CD8-positive, alpha-beta T cell (primary cell): ENCODE measurements at regions of chr17 and their contacts with region 1.

Region 1: DNA sequence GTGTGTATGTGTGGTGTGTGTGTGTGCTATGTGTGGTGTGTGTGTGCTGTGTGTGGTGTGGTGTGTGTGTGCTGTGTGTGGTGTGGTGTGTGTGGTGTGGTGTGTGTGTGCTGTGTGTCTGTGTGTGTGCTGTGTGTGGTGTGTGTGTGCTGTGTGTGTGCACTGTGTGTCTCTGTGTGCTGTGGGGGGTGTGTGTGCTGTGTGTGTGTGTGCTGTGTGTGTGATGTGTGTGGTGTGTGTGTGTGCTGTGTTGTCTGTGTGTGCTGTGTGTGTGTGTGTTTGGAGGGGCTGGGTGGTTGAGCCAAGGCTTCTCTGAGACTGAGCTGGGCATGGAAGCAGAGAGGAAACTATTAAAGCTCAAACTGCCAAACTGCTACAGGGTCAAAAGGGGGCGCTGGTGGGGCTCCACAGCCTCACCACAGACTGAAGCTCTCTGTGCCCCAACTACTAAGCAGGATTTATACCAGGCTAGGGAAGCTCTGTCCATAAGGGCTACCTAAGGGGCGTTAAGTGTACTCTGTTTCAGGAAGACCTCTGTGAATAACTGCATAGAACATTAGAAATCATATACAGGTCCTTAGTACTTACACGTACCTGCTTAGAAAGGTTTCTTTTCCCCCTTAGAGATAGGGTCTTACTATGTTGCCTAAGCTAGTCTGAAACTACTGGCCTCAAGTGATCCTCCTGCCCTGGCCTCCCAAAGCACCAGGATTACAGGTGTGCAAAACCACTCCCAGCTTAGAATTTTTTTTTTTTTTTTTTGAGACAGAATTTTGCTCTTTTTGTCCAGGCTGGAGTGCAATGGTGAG is 27.8 kb upstream of the GHDC start:
- DNase-seq: peak; percentile 24 to 82 (median 66)
- ATAC-seq: peak; percentile 98
- H3K4me3 ChIP-seq: no peak overlapping the region
- H3K4me3 Mint-ChIP-seq: no peak overlapping the region
- H3K27ac ChIP-seq: no peak overlapping the region
- H3K27ac Mint-ChIP-seq: no peak overlapping the region
- H3K4me1 ChIP-seq: no peaks in the 10 kb centered on the region
- H3K4me1 Mint-ChIP-seq: peaks cover 5% of the 10 kb centered on the region
- H3K27me3 ChIP-seq: no peaks in the 10 kb centered on the region
- H3K27me3 Mint-ChIP-seq: no peaks in the 10 kb centered on the region
- CTCF ChIP-seq: peak; percentile 62

Region 2: DNA sequence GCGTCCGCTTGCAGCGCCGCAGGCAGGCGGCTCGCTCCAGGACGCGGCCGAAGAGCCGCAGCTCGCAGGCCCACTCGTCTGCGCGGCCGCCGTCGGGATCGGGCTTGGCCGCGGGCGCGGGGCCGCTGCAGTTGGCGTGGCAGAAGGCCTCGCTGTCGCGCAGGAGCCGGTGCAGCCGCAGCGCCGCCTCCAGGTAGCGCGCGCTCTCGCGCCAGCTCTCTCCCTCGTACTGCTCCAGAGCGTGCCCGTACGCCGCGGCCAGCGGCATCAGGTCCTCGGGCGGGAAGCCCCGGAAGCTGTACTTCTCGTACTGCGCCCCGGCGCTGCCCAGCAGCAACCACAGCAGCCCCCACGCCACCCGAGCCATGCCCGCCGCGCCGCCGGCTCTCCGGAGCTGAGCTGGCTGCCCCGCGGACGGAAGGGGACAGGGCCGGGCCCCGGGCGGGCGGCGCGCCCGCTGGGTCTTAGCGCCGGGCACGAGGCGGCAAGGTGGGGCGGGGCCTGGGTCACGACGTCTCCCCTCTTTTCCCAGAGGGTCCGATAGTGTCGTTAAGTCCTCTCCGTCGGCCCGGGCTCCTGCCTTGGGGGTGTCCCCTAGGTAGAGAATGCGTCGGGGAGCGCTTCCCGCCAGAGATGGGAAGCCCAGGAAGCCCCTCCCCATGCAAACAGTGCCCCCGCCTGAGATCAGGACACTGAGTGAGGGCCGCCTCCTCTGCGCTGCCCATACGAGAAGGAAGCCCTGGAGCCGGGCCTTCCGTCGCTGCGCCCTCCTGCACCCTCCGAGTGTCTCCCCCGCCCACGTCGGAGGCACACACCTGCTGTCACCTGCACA is 410.4 kb before region 1 on chr17 and contains the start of gene P3H4:
- CTCF ChIA-PET with region 1: no interaction called
- POLR2A ChIA-PET with region 1: no interaction called
- intact Hi-C with region 1: no loop called
- DNase-seq: peak; percentile 51 to 89 (median 75)
- ATAC-seq: peak; percentile 87
- H3K4me3 ChIP-seq: peak within 1 kb of the TSS; percentile 73 to 93
- H3K4me3 Mint-ChIP-seq: peak within 1 kb of the TSS; percentile 93
- H3K27ac ChIP-seq: peak within 1 kb of the TSS in 1 of 2 experiments; percentile 35
- H3K27ac Mint-ChIP-seq: peak within 1 kb of the TSS; percentile 55
- H3K4me1 ChIP-seq: peaks cover 26% of the 10 kb centered on the region
- H3K4me1 Mint-ChIP-seq: peaks cover 23% of the 10 kb centered on the region
- H3K27me3 ChIP-seq: no peaks in the 10 kb centered on the region
- H3K27me3 Mint-ChIP-seq: peaks cover 2% of the 10 kb centered on the region
- CTCF ChIP-seq: peak; percentile 51
- total RNA-seq, gene P3H4: 0.89 to 1.0 TPM

Region 3: DNA sequence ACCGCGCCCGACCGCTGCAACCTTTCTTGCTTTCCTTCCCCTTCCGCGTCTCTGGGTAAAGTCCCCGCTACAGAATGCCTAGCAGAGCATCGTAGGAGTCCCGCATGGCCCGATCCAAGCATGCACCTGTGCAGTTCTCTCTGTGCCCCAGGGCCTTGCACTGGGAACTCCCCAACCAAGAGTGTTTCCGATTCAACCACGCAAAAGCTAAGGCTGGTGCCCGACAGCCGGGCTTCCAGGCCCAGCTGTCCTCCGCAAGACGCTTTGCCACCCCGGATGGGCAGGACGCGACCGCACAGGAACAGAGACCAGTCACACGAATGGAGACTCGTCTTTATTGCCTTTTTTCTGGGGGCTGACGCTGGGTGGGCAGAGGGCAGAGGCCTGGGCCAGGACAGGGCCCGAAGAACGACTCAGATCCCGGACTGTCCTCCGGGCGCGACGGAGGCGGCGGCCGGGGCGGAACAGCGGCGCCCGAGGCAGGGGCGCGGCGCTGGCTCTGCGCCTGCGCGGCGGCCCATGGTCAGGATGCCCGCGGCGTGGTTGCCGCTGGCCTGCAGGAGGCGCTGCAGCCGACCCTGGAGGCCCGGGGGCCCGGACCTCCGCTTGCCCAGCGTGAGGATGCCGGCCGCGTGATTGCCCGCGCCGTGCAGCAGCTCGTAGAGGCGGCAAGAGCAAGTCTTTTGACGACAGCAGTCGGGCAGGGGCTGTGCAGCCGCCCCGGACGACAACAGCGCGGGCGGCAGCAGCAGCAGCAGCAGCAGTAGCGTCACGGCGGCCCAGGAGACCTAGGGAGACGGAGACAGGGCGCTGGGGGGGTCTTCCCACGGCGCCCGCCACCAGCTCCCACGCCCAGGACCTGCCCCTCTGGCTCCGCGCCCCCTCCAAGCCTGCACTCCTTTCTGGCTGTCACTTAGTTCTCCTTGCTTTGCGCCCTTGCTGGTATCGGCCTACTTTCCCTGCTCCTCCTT is 38.1 kb before region 1 on chr17:
- CTCF ChIA-PET with region 1: interaction called, 10 read pairs
- POLR2A ChIA-PET with region 1: no interaction called
- intact Hi-C with region 1: loop called in 1 of 2 experiments (anchors 2 kb)
- DNase-seq: peak; percentile 49 to 88 (median 74)
- ATAC-seq: peak; percentile 54
- H3K4me3 ChIP-seq: peak overlapping the region; percentile 75 to 91
- H3K4me3 Mint-ChIP-seq: peak overlapping the region; percentile 90
- H3K27ac ChIP-seq: peak overlapping the region; percentile 42 to 74
- H3K27ac Mint-ChIP-seq: peak overlapping the region; percentile 83
- H3K4me1 ChIP-seq: peaks cover 35% of the 10 kb centered on the region
- H3K4me1 Mint-ChIP-seq: peaks cover 37% of the 10 kb centered on the region
- H3K27me3 ChIP-seq: peaks cover 8 to 9% of the 10 kb centered on the region in 2 experiments
- H3K27me3 Mint-ChIP-seq: peaks cover 17% of the 10 kb centered on the region
- CTCF ChIP-seq: peak; percentile 68

Region 4: GRCh38 chr17:42248351-42249179 is 26.4 kb after region 1 on chr17:
- CTCF ChIA-PET with region 1: interaction called, 30 read pairs
- POLR2A ChIA-PET with region 1: interaction called, 10 read pairs
- intact Hi-C with region 1: loop called in 1 of 2 experiments (anchors 1 kb)
- DNase-seq: peak; percentile 60 to 96 (median 80)
- ATAC-seq: peak; percentile 85
- H3K4me3 ChIP-seq: peak overlapping the region; percentile 36 to 46
- H3K4me3 Mint-ChIP-seq: peak overlapping the region; percentile 81
- H3K27ac ChIP-seq: peak overlapping the region; percentile 87 to 90
- H3K27ac Mint-ChIP-seq: peak overlapping the region; percentile 98
- H3K4me1 ChIP-seq: peaks cover 55% of the 10 kb centered on the region
- H3K4me1 Mint-ChIP-seq: peaks cover 70% of the 10 kb centered on the region
- H3K27me3 ChIP-seq: no peaks in the 10 kb centered on the region
- H3K27me3 Mint-ChIP-seq: no peaks in the 10 kb centered on the region
- CTCF ChIP-seq: no peak

Region 5: DNA sequence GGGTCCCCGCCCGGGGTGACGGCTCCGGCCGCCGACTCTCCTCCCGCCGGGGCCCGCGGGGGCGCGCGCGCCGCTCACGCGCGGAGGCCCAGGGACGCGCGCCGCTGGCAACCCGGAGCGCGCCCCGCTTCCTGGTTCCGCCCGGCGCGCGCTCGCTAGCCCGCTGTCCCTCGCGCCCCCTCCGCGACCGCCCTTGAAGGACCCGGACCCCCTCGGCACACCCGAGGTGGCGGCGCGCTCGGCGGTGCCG is 54.1 kb after region 1 on chr17 and contains the start of gene STAT5B:
- CTCF ChIA-PET with region 1: interaction called, 19 read pairs
- POLR2A ChIA-PET with region 1: interaction called, 10 read pairs
- intact Hi-C with region 1: no loop called
- DNase-seq: peak; percentile 30 to 89 (median 66)
- ATAC-seq: peak; percentile 33
- H3K4me3 ChIP-seq: peak within 1 kb of the TSS; percentile 72 to 84
- H3K4me3 Mint-ChIP-seq: peak within 1 kb of the TSS; percentile 96
- H3K27ac ChIP-seq: peak within 1 kb of the TSS; percentile 77 to 83
- H3K27ac Mint-ChIP-seq: peak within 1 kb of the TSS; percentile 98
- H3K4me1 ChIP-seq: peaks cover 48% of the 10 kb centered on the region
- H3K4me1 Mint-ChIP-seq: peaks cover 52% of the 10 kb centered on the region
- H3K27me3 ChIP-seq: no peaks in the 10 kb centered on the region
- H3K27me3 Mint-ChIP-seq: no peaks in the 10 kb centered on the region
- CTCF ChIP-seq: no peak
- total RNA-seq, gene STAT5B: 85.2 to 85.5 TPM

Region 6: DNA sequence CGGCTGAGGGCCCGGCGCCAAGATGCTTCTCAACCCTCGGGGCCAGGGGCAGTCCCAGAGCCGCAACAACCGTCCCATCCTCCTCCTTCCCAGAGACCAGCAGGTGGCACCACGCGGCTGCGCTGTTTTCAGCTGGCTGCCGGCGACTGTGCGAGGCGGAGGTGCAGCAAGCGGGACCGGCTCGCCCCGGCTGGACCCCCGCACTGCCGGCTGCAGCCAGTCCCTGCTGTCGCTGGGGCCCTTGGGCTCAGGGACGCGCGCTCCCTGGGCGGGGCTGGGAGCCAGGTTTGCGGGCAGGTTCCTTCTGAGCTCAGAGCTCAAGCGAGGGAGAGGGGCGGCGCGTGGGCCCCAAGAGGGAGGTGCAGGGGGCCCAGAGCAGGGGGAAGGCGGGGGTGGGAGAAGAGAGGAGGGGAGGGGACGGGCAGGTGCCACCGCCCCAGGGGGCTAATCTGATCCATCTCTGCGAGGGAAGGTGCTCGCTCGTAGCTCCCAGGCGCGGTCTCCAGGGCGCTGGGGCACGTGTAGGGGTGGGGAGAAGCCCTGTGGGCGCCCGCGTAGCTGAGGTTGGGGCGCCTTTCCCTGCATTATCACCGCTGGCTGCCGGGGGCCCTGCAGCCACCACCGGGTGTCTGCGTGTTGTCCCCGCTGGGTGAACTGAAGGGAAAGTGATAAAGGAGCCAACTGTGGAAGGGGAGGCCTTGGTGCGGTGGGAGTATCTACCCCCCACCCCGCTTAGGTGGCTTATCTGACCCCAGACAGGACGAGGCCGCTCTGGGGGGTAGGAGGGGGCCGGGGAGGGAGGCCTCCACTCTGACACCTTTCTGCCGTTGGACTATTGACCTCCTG is 90.4 kb after region 1 on chr17:
- CTCF ChIA-PET with region 1: interaction called, 56 read pairs
- POLR2A ChIA-PET with region 1: interaction called, 5 read pairs
- intact Hi-C with region 1: loop called (anchors 2 to 5 kb)
- DNase-seq: peak; percentile 45 to 89 (median 79)
- ATAC-seq: peak; percentile 61
- H3K4me3 ChIP-seq: peak overlapping the region; percentile 20 to 38
- H3K4me3 Mint-ChIP-seq: peak overlapping the region; percentile 74
- H3K27ac ChIP-seq: peak overlapping the region; percentile 31 to 66
- H3K27ac Mint-ChIP-seq: peak overlapping the region; percentile 86
- H3K4me1 ChIP-seq: peaks cover 69% of the 10 kb centered on the region
- H3K4me1 Mint-ChIP-seq: peaks cover 72% of the 10 kb centered on the region
- H3K27me3 ChIP-seq: no peaks in the 10 kb centered on the region
- H3K27me3 Mint-ChIP-seq: no peaks in the 10 kb centered on the region
- CTCF ChIP-seq: peak; percentile 62

Region 7: GRCh38 chr17:42517516-42517915 is 295.4 kb after region 1 on chr17:
- CTCF ChIA-PET with region 1: interaction called, 6 read pairs
- POLR2A ChIA-PET with region 1: no interaction called
- intact Hi-C with region 1: loop called in 1 of 2 experiments (anchors 5 kb)
- DNase-seq: peak; percentile 68 to 90 (median 84)
- ATAC-seq: peak; percentile 92
- H3K4me3 ChIP-seq: no peak overlapping the region
- H3K4me3 Mint-ChIP-seq: no peak overlapping the region
- H3K27ac ChIP-seq: no peak overlapping the region
- H3K27ac Mint-ChIP-seq: no peak overlapping the region
- H3K4me1 ChIP-seq: no peaks in the 10 kb centered on the region
- H3K4me1 Mint-ChIP-seq: peaks cover 5% of the 10 kb centered on the region
- H3K27me3 ChIP-seq: no peaks in the 10 kb centered on the region
- H3K27me3 Mint-ChIP-seq: no peaks in the 10 kb centered on the region
- CTCF ChIP-seq: peak; percentile 96